Dorsolateral prefrontal cortex (tissue), 120 donors: ENCODE measurements at regions of chr1 and their contacts with region 1.

Region 1: GRCh38 chr1:165073185-165074007 is 283.1 kb downstream of the LMX1A start:
- DNase-seq: no peak
- H3K4me3 ChIP-seq: no peak overlapping the region
- H3K27ac ChIP-seq: peak overlapping the region in 54 of 59 donors; percentile 9 to 100 (median 96)
- H3K27me3 ChIP-seq: no peaks in the 10 kb centered on the region
- CTCF ChIP-seq: peak; percentile 66 to 94 (median 82)

Region 2: DNA sequence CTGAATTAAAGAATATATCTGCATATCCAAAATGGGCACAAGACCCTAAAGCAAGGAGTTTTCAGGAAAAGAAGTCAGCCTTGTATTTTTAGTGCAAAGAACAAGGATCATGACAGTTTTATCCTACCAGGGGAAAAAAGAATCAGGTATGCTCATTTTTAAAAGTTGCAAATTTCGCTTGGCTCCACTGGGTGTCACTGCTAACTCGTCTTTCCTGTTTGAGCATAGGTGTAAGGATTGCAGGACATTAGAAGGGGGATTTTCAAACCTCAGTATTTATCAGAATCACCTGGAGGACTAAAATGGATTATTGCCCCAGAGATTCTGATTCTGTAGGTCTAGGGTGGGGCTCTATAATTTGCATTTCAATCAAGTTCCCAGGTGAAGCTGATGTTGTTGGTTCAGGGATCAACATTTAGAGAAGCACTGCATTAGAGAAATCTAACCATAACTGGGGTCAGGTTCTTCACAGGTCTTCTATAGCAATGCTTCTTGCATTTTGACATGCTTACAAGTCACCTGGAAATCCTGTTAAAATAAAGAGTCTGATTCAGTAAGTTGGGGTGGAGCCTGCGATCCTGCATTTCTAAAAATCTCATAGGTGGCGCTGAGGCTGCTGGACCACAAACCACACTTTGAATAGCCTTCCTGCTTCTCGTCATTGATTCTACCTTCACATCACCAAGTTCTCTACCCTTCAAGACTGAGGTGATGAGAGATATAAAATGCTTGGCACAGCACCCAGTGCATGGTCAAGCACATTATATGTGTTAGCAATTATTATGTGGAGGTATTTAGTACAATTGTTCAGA is 1712.1 kb before region 1 on chr1:
- intact Hi-C with region 1: loop called (anchors 5 kb)
- DNase-seq: no peak
- H3K4me3 ChIP-seq: no peak overlapping the region
- H3K27ac ChIP-seq: no peak overlapping the region
- H3K27me3 ChIP-seq: no peaks in the 10 kb centered on the region
- CTCF ChIP-seq: peak in 54 of 56 donors; percentile 22 to 78 (median 56)

Region 3: DNA sequence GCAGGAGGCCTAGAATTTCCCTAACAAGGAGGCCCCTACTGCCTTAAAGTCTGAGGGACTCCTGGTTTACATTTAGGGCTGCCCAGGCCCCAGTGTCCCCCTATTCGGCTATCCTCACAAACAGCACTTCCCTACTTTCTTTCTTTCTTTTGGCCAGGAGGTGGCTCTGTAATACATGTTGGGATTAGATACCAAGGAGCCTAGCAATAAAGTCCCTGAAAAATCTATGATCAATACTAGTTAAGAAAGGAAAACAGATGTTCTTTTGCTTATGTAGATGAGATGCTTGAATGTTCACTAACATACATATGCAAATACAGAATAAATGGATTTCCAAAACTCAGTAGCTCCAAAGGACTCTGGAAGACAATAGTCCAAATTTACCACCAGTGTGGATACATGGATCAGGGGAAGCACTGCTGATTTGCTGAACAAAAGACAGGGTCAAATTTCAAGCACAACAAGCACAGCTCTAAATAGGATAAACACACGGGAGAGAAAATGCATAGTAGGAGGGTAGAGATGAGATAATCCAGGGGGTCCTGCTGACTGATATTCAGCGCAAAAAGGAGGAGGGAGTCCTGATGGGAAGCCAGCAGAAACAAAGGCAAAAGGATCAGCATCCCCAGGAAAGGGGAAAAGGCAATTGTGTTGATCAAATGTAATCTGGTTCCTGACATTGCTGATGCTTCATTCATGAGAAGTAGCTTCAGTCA is 1511.7 kb before region 1 on chr1:
- intact Hi-C with region 1: loop called in 1 of 2 experiments (anchors 10 kb)
- DNase-seq: no peak
- H3K4me3 ChIP-seq: no peak overlapping the region
- H3K27ac ChIP-seq: no peak overlapping the region
- H3K27me3 ChIP-seq: no peaks in the 10 kb centered on the region
- CTCF ChIP-seq: peak in 47 of 56 donors; percentile 16 to 61 (median 38)

Region 4: GRCh38 chr1:164559342-164560051 is 513.9 kb before region 1 on chr1:
- intact Hi-C with region 1: loop called (anchors 5 to 10 kb)
- DNase-seq: peak; percentile 28 to 60 (median 42)
- H3K4me3 ChIP-seq: peak overlapping the region; percentile 50 to 91 (median 76)
- H3K27ac ChIP-seq: peak overlapping the region; percentile 56 to 93 (median 87)
- H3K27me3 ChIP-seq: no peaks in the 10 kb centered on the region
- CTCF ChIP-seq: no peak

Region 5: GRCh38 chr1:164803366-164803765 is 270.0 kb before region 1 on chr1:
- intact Hi-C with region 1: loop called in 1 of 2 experiments (anchors 5 kb)
- DNase-seq: no peak
- H3K4me3 ChIP-seq: no peak overlapping the region
- H3K27ac ChIP-seq: peak overlapping the region in 15 of 59 donors; percentile 3 to 87 (median 31)
- H3K27me3 ChIP-seq: no peaks in the 10 kb centered on the region
- CTCF ChIP-seq: no peak

Region 6: DNA sequence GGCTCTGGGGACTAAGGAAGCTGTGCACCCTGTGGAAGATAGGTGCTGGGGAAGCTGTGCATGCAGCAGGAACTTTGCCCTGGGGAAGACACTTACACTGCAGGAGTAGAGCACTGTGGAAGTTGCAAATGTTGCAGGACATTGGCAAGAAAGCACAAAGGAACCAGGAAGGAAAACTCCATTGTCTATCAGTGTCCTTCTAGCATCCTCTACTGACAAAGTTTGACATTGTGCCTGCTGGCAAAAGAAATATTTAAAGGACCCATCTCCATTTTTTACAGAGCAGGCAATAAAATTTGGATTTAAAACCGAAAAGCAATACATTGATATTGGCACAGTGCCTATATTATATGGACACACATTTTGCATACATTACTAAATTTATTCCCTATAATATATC is 120.3 kb before region 1 on chr1:
- intact Hi-C with region 1: loop called in 1 of 2 experiments (anchors 10 kb)
- DNase-seq: no peak
- H3K4me3 ChIP-seq: no peak overlapping the region
- H3K27ac ChIP-seq: peak overlapping the region in 5 of 59 donors; percentile 13 to 48 (median 32)
- H3K27me3 ChIP-seq: no peaks in the 10 kb centered on the region
- CTCF ChIP-seq: peak in 27 of 56 donors; percentile 10 to 48 (median 34)